CD8-positive, alpha-beta memory T cell (primary cell): ENCODE measurements at regions of chr12 and their contacts with region 1.

Region 1: GRCh38 chr12:122051231-122051876 is 27.2 kb upstream of the MLXIP start:
- DNase-seq: no peak
- H3K4me3 ChIP-seq: no peak overlapping the region
- H3K4me3 Mint-ChIP-seq: no peak overlapping the region
- H3K27ac ChIP-seq: no peak overlapping the region
- H3K27ac Mint-ChIP-seq: no peak overlapping the region
- H3K4me1 ChIP-seq: peaks cover 3% of the 10 kb centered on the region
- H3K4me1 Mint-ChIP-seq: peaks cover 0 to 7% (median 2%) of the 10 kb centered on the region in 3 donors
- H3K27me3 ChIP-seq: no peaks in the 10 kb centered on the region
- H3K27me3 Mint-ChIP-seq: no peaks in the 10 kb centered on the region

Region 2: GRCh38 chr12:122031342-122032216 is 19.8 kb before region 1 on chr12:
- CTCF ChIA-PET with region 1: no interaction called
- POLR2A ChIA-PET with region 1: no interaction called
- DNase-seq: peak in 4 of 5 donors; percentile 21 to 58 (median 28)
- H3K4me3 ChIP-seq: no peak overlapping the region
- H3K4me3 Mint-ChIP-seq: no peak overlapping the region
- H3K27ac ChIP-seq: no peak overlapping the region
- H3K27ac Mint-ChIP-seq: no peak overlapping the region
- H3K4me1 ChIP-seq: no peaks in the 10 kb centered on the region
- H3K4me1 Mint-ChIP-seq: peaks cover 17 to 20% (median 18%) of the 10 kb centered on the region in 3 donors
- H3K27me3 ChIP-seq: peaks cover 8% of the 10 kb centered on the region
- H3K27me3 Mint-ChIP-seq: peaks cover 4 to 9% of the 10 kb centered on the region in 2 donors

Region 3: GRCh38 chr12:122067966-122068365 is 16.6 kb after region 1 on chr12:
- CTCF ChIA-PET with region 1: interaction called, 18 read pairs
- POLR2A ChIA-PET with region 1: no interaction called
- DNase-seq: peak in 3 of 5 donors; percentile 9 to 59 (median 42)
- H3K4me3 ChIP-seq: peak overlapping the region; percentile 44
- H3K4me3 Mint-ChIP-seq: peak overlapping the region; percentile 8 to 77 (median 63)
- H3K27ac ChIP-seq: no peak overlapping the region
- H3K27ac Mint-ChIP-seq: peak overlapping the region; percentile 31 to 98 (median 80)
- H3K4me1 ChIP-seq: peaks cover 13% of the 10 kb centered on the region
- H3K4me1 Mint-ChIP-seq: peaks cover 10 to 12% (median 12%) of the 10 kb centered on the region in 3 donors
- H3K27me3 ChIP-seq: no peaks in the 10 kb centered on the region
- H3K27me3 Mint-ChIP-seq: no peaks in the 10 kb centered on the region

Region 4: DNA sequence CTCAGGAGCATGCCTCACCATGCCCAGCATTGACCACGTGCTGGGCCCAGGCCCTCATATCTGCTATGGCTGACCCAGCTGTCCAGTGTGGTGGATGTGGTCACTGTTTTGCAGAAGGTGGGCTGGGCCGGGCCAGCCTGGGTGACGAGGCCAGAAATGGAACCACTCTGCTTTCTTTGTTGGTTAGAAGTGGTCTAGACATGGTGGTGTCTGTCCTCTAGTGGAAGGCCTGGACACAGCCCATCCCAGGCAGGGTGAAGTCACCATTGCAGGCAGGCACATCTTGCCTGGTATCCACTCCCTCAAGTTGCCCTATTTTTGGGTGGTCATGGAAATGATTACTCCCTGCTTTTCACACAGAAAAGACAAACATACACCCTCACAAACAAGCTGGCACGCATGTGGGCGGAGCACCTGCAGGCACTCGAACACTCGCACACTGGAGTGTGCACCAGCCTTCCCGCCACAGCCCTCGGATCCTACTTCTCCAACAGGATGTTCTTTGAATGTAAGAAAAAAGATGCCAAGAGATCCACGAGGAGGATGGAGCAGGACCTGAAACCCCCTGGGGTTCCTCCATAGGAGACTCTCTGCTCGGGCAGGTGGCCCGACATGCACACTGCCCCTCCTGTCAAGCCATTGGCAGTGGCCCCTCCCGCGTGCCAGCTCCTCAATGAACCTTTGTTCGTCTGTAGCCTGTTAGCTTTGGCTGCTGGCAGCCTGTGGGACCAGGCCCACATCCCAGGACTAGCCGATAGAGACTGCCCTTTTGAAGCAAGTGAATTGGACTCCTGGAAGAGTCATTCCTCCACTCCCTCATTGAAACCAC is 65.6 kb after region 1 on chr12:
- CTCF ChIA-PET with region 1: interaction called, 94 read pairs
- POLR2A ChIA-PET with region 1: no interaction called
- DNase-seq: peak in 1 of 5 donors; percentile 22
- H3K4me3 ChIP-seq: no peak overlapping the region
- H3K4me3 Mint-ChIP-seq: no peak overlapping the region
- H3K27ac ChIP-seq: no peak overlapping the region
- H3K27ac Mint-ChIP-seq: peak overlapping the region in 3 of 8 donors; percentile 3 to 52 (median 46)
- H3K4me1 ChIP-seq: no peaks in the 10 kb centered on the region
- H3K4me1 Mint-ChIP-seq: peaks cover 12 to 25% (median 13%) of the 10 kb centered on the region in 3 donors
- H3K27me3 ChIP-seq: no peaks in the 10 kb centered on the region
- H3K27me3 Mint-ChIP-seq: no peaks in the 10 kb centered on the region

Region 5: DNA sequence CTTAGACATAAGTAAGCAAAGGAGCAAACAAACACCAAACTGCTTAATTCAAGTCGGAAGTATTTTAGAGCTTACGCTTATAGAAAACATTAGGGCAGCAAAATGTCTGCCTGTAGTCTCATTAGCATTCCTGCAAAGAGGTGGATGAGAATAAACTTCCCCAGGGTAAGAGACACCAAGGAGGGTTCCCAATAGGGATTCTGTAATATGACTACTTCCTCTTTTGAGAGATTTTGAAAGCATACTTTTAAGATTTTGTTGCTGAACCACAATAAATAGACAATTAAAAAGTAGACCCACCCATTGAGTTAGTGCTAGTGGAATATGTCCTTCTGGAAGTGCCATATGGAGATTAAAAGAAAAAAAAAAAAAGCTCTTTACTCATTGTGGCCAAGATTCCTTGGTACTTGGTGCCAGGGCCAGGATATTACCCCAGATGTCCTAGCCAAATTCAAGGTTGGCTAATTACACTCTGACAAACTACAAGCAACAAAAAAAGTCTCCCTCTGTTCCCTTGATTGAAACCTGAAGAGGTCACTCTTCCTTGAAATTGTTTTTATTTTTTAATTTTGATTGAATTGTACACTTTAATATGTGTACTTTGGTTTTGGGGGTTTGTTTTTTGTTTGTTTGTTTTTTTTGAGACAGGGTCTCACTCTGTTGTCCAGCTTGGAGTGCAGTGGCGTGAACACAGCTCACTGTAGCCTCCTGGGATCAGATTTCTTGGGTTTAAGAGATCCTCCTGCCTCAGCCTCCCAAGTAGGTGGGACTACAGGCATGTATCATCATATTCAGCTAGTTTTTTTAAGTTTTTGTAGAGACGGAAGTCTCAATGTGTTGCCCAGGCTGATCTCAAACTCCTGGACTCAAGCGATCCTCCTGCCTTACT is 362.4 kb after region 1 on chr12:
- CTCF ChIA-PET with region 1: no interaction called
- POLR2A ChIA-PET with region 1: no interaction called
- DNase-seq: no peak
- H3K4me3 ChIP-seq: no peak overlapping the region
- H3K4me3 Mint-ChIP-seq: peak overlapping the region in 1 of 7 donors; percentile 73
- H3K27ac ChIP-seq: no peak overlapping the region
- H3K27ac Mint-ChIP-seq: peak overlapping the region in 6 of 8 donors; percentile 22 to 87 (median 52)
- H3K4me1 ChIP-seq: peaks cover 20% of the 10 kb centered on the region
- H3K4me1 Mint-ChIP-seq: peaks cover 26 to 45% (median 34%) of the 10 kb centered on the region in 3 donors
- H3K27me3 ChIP-seq: no peaks in the 10 kb centered on the region
- H3K27me3 Mint-ChIP-seq: no peaks in the 10 kb centered on the region